Activated CD8-positive, alpha-beta T cell treated with anti-CD3 and anti-CD28 coated beads, Interleukin-2, amount 10 ng/mL, durations not matched to agents 7 days and 5 days (primary cell): ENCODE measurements at regions of chr17 and their contacts with region 1.

Region 1: DNA sequence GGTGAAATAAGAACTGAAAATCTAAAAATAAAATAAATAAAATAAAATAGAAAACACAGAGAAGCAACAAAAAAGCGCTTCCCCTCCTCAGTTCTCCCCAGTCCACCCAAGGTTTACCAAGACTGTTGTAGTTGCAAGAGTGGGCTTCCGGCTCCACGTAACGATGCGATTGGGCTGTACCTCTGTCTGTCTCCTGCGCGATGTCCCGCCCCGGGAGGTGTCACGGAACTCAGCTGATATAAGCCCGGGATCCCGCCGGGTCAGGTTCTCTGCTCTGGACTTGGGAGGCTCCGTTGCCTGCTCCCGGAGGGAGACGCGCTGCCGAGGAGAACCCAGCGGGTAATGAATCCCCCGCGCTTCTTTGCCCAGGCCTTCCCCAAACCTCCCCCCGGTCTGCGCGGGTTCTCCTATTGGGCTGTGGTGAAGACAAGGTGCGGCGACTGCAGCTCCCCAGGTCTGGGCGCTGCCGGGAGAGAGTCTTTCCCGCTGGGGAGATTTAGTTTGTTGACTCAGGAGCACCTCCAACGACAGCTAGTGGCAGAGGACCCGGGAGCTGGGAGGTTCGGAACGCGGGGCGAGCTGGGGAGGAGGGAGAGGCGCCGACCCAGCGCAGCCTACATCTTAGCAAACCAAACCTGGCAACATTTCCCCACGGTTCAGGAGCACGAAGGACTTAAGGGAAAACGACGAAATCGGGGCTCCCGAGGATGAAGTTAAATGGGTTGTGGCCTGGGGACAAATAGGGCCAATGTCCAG is at the start of gene SLFN5:
- DNase-seq: peak; percentile 97
- ATAC-seq: peak; percentile 80
- H3K4me3 Mint-ChIP-seq: peak within 1 kb of the TSS; percentile 99
- H3K27ac Mint-ChIP-seq: peak within 1 kb of the TSS; percentile 98
- H3K4me1 Mint-ChIP-seq: peaks cover 50% of the 10 kb centered on the region
- H3K27me3 Mint-ChIP-seq: no peaks in the 10 kb centered on the region
- total RNA-seq, gene SLFN5: 209 to 212 TPM

Region 2: DNA sequence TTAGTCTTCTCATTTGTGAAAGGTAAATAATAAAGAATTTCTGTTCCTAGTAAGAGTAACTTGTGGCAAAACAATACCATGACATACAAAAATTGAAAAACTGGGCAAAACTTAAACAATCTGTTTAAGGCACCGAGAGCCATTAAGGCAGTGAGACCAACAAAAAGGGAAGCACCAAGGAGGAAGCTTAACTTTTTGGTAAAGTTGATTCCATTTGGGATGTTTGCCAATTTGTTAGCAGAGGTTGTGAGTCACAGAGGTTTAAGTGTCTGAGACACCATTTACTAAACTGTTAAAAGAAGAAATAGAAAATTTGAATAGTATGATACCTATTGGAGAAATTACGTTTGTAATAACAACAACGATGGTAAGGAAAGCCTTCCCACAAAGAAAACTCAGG is 53.7 kb before region 1 on chr17:
- CTCF ChIA-PET with region 1: interaction called, 9 read pairs
- POLR2A ChIA-PET with region 1: interaction called, 36 read pairs
- DNase-seq: peak; percentile 7
- ATAC-seq: no peak
- H3K4me3 Mint-ChIP-seq: peak overlapping the region; percentile 58
- H3K27ac Mint-ChIP-seq: no peak overlapping the region
- H3K4me1 Mint-ChIP-seq: peaks cover 55% of the 10 kb centered on the region
- H3K27me3 Mint-ChIP-seq: no peaks in the 10 kb centered on the region

Region 3: GRCh38 chr17:35227546-35227945 is 15.4 kb before region 1 on chr17:
- CTCF ChIA-PET with region 1: interaction called, 15 read pairs
- POLR2A ChIA-PET with region 1: interaction called, 11 read pairs
- DNase-seq: no peak
- ATAC-seq: no peak
- H3K4me3 Mint-ChIP-seq: no peak overlapping the region
- H3K27ac Mint-ChIP-seq: no peak overlapping the region
- H3K4me1 Mint-ChIP-seq: peaks cover 24% of the 10 kb centered on the region
- H3K27me3 Mint-ChIP-seq: no peaks in the 10 kb centered on the region

Region 4: GRCh38 chr17:35373534-35373983 is 130.6 kb after region 1 on chr17 and contains the start of gene SLFN11:
- CTCF ChIA-PET with region 1: interaction called, 4 read pairs
- POLR2A ChIA-PET with region 1: interaction called, 10 read pairs
- DNase-seq: peak; percentile 86
- ATAC-seq: peak; percentile 81
- H3K4me3 Mint-ChIP-seq: peak within 1 kb of the TSS; percentile 99
- H3K27ac Mint-ChIP-seq: peak within 1 kb of the TSS; percentile 98
- H3K4me1 Mint-ChIP-seq: peaks cover 57% of the 10 kb centered on the region
- H3K27me3 Mint-ChIP-seq: peaks cover 3% of the 10 kb centered on the region
- total RNA-seq, gene SLFN11: 40.0 to 50.1 TPM

Region 5: GRCh38 chr17:35578197-35578928 is 335.4 kb after region 1 on chr17 and contains the start of gene PEX12:
- CTCF ChIA-PET with region 1: no interaction called
- POLR2A ChIA-PET with region 1: interaction called, 12 read pairs
- DNase-seq: peak; percentile 94
- ATAC-seq: peak; percentile 96
- H3K4me3 Mint-ChIP-seq: peak within 1 kb of the TSS; percentile 93
- H3K27ac Mint-ChIP-seq: peak within 1 kb of the TSS; percentile 96
- H3K4me1 Mint-ChIP-seq: peaks cover 28% of the 10 kb centered on the region
- H3K27me3 Mint-ChIP-seq: peaks cover under 1% of the 10 kb centered on the region
- total RNA-seq, gene PEX12: 4.0 to 4.1 TPM